ENCODE measurements at regions of chr9 and their contacts with region 1.

Region 1: DNA sequence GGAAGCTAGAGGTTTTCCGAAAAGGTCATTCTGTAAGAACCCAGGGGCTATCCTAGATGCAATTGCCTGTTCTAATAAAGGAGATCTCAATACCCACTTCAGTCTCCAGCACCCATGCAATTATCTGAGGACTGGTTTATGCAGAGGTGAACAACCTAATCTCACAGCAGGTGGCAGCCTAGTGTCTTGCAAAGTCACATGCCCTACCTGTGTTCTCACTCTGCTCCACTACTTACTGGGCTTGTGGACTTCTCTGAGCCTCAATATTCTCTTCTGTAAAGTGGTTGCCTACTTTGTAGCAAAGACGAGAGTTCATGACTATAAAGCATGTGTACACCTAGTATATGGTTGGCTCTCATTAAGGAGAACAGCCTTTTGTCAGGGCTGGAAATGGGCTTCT is 21.0 kb upstream of the ALDH1B1 start:
- DNase-seq: peak in 1 of 2 donors; percentile 63
- H3K4me3 ChIP-seq: no peak overlapping the region
- H3K27ac ChIP-seq: no peak overlapping the region
- H3K4me1 ChIP-seq: peaks cover 0 to 4% of the 10 kb centered on the region in 2 donors
- H3K27me3 ChIP-seq: no peaks in the 10 kb centered on the region
- CTCF ChIP-seq: peak in 2 of 3 experiments; percentile 17 to 49

Region 2: DNA sequence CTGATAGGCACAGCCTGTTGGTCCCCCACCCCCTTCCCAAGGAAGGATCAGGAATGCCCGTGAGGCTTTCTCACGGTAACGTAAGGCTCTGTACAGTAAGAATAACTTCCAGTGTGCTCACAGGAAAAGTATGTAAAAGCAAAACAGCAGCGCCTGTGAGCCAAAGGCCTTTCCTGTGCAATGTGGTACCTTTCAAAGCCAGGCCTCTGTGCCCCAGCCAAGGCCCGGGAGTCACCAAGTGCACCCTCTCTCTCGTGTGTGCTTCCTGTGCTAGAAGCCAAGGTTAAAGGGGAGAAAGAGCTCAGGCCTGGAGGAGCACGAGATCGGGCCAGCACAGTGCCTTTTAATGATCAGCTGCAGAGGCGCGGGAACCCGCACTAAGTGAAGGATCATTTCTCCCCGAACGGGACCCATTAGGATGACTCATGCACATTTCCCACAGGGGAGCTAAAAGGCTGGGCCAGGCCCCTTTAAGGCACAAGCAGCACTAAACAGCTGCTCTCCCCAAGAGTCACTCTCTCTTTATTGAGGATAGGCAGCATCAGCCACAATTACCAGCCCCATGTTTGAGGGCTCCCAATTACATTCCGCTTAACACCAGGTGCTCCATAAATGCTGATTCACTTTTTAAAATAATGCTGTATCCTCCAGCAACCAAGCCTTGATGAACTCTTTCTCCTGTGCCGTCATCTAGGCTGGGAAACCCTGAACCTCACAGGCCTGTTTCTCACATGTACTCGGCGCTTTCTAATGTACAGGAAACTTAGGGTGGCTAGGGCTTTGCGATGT is 345.3 kb before region 1 on chr9:
- intact Hi-C with region 1: loop called (anchors 5 kb)
- DNase-seq: peak; percentile 25 to 84
- H3K4me3 ChIP-seq: peak overlapping the region in 1 of 2 donors; percentile 8
- H3K27ac ChIP-seq: peak overlapping the region; percentile 68 to 85
- H3K4me1 ChIP-seq: peaks cover 22 to 56% of the 10 kb centered on the region in 2 donors
- H3K27me3 ChIP-seq: no peaks in the 10 kb centered on the region
- CTCF ChIP-seq: no peak

Region 3: GRCh38 chr9:38318759-38319495 is 52.6 kb before region 1 on chr9:
- intact Hi-C with region 1: loop called (anchors 10 kb)
- DNase-seq: peak in 1 of 2 donors; percentile 50
- H3K4me3 ChIP-seq: peak overlapping the region; percentile 4 to 52
- H3K27ac ChIP-seq: peak overlapping the region; percentile 51 to 58
- H3K4me1 ChIP-seq: peaks cover 3% of the 10 kb centered on the region in 2 donors
- H3K27me3 ChIP-seq: no peaks in the 10 kb centered on the region
- CTCF ChIP-seq: no peak

Region 4: GRCh38 chr9:38386319-38386895 is 14.9 kb after region 1 on chr9:
- intact Hi-C with region 1: no loop called
- DNase-seq: peak in 1 of 2 donors; percentile 34
- H3K4me3 ChIP-seq: no peak overlapping the region
- H3K27ac ChIP-seq: peak overlapping the region; percentile 98 to 99
- H3K4me1 ChIP-seq: peaks cover 30 to 58% of the 10 kb centered on the region in 2 donors
- H3K27me3 ChIP-seq: no peaks in the 10 kb centered on the region
- CTCF ChIP-seq: no peak

Region 5: GRCh38 chr9:38405785-38406184 is 34.3 kb after region 1 on chr9:
- intact Hi-C with region 1: loop called (anchors 1 kb)
- DNase-seq: no peak
- H3K4me3 ChIP-seq: no peak overlapping the region
- H3K27ac ChIP-seq: no peak overlapping the region
- H3K4me1 ChIP-seq: peaks cover 0 to 2% of the 10 kb centered on the region in 2 donors
- H3K27me3 ChIP-seq: no peaks in the 10 kb centered on the region
- CTCF ChIP-seq: no peak

Region 6: GRCh38 chr9:38432922-38433510 is 61.5 kb after region 1 on chr9:
- intact Hi-C with region 1: loop called (anchors 1 kb)
- DNase-seq: peak in 1 of 2 donors; percentile 46
- H3K4me3 ChIP-seq: no peak overlapping the region
- H3K27ac ChIP-seq: no peak overlapping the region
- H3K4me1 ChIP-seq: no peaks in the 10 kb centered on the region
- H3K27me3 ChIP-seq: no peaks in the 10 kb centered on the region
- CTCF ChIP-seq: peak; percentile 53 to 75 (median 68)

Region 7: GRCh38 chr9:38638893-38639580 is 267.5 kb after region 1 on chr9:
- intact Hi-C with region 1: no loop called
- DNase-seq: no peak
- H3K4me3 ChIP-seq: no peak overlapping the region
- H3K27ac ChIP-seq: no peak overlapping the region
- H3K4me1 ChIP-seq: no peaks in the 10 kb centered on the region
- H3K27me3 ChIP-seq: no peaks in the 10 kb centered on the region
- CTCF ChIP-seq: no peak

Measured in ascending aorta (tissue), 2 donors.